Endothelial cell of umbilical vein (primary cell): ENCODE measurements at regions of chr7 and their contacts with region 1.

Region 1: GRCh38 chr7:32164346-32164957 is 94.2 kb upstream of the PDE1C start:
- DNase-seq: peak; percentile 70
- H3K4me3 ChIP-seq: no peak overlapping the region
- H3K27ac ChIP-seq: no peak overlapping the region
- H3K4me1 ChIP-seq: peaks cover 26% of the 10 kb centered on the region
- H3K27me3 ChIP-seq: no peaks in the 10 kb centered on the region
- CTCF ChIP-seq: peak; percentile 43 to 49
- POLR2A ChIP-seq: no peak

Region 2: DNA sequence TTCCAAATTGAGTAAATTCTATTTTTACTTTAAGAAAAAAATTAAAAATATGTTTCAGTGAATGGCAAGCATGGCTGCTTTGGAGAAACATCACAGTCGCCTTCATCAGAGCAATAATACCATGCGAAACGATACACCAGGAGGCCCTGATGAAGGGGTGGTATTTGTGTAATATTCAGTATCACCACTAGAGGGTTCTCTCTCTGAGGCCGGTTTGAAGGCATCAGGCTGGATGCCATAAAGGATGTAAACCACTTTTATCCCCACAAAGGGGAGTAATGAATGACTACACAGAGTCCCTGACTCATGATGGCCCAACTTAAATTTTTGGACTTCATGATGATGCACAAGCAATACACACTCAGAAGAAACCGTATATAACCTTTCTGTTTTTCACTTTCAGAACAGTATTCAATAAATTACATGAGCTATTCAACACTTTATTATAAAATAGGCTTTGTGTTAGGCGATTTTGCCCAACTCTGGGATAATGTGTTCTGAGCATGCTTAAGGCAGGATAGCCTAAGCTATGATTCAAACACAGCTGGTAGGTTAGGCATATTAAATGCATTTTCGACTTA is 382.0 kb before region 1 on chr7:
- CTCF ChIA-PET with region 1: interaction called, 58 read pairs
- POLR2A ChIA-PET with region 1: no interaction called
- dilution Hi-C with region 1: no loop called
- intact Hi-C with region 1: loop called (anchors 1 kb)
- DNase-seq: peak; percentile 69
- H3K4me3 ChIP-seq: no peak overlapping the region
- H3K27ac ChIP-seq: no peak overlapping the region
- H3K4me1 ChIP-seq: no peaks in the 10 kb centered on the region
- H3K27me3 ChIP-seq: no peaks in the 10 kb centered on the region
- CTCF ChIP-seq: peak; percentile 68 to 70
- POLR2A ChIP-seq: no peak

Region 3: DNA sequence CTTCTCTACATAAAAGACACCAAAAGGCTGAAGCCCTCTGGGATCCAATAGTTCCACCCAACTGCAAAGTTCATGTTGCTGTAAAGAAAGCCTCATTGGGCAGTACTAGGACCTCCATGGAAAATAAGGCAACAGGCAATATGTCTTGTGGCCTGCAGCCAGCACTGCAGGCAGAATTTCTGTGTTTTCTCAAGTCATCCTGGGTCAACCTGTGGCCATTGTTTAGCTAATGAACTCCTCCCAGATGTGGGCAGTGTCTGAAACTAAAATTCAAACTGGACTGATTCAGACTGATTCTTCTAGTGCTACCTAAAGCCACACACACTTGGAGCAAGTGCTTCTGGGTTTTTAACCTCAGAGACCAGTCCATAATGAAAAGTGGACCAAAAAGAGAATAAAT is 335.9 kb before region 1 on chr7:
- CTCF ChIA-PET with region 1: interaction called, 18 read pairs
- POLR2A ChIA-PET with region 1: no interaction called
- dilution Hi-C with region 1: no loop called
- intact Hi-C with region 1: no loop called
- DNase-seq: peak; percentile 50
- H3K4me3 ChIP-seq: no peak overlapping the region
- H3K27ac ChIP-seq: no peak overlapping the region
- H3K4me1 ChIP-seq: peaks cover 20% of the 10 kb centered on the region
- H3K27me3 ChIP-seq: no peaks in the 10 kb centered on the region
- CTCF ChIP-seq: no peak
- POLR2A ChIP-seq: no peak

Region 4: DNA sequence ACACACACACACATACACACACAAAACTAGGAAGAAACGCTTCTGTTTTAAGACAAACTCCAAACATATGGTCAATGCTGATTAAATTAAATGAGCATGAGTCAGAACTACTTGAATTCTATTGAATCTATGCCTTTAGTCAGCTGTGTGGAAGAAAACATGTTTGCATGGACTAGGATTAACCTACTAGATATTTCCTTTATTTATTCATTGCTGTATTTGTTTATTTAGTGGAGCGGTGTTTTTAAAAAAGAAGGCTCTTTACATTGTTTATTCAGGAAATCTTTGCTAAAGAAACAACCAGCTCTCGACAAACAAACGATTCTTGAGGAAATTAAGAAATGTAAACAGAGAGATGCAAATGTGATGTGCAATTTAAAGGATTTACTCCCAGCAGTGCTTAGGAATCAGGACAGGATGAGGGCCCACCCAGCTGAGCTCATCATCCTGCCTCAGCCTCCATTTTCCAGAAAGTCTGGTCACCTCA is 177.5 kb before region 1 on chr7:
- CTCF ChIA-PET with region 1: interaction called, 7 read pairs
- POLR2A ChIA-PET with region 1: no interaction called
- dilution Hi-C with region 1: no loop called
- intact Hi-C with region 1: loop called (anchors 2 kb)
- DNase-seq: peak; percentile 85
- H3K4me3 ChIP-seq: no peak overlapping the region
- H3K27ac ChIP-seq: peak overlapping the region; percentile 83
- H3K4me1 ChIP-seq: peaks cover 34% of the 10 kb centered on the region
- H3K27me3 ChIP-seq: no peaks in the 10 kb centered on the region
- CTCF ChIP-seq: no peak
- POLR2A ChIP-seq: no peak

Region 5: GRCh38 chr7:32140210-32140939 is 24.1 kb before region 1 on chr7:
- CTCF ChIA-PET with region 1: interaction called, 31 read pairs
- POLR2A ChIA-PET with region 1: no interaction called
- dilution Hi-C with region 1: no loop called
- intact Hi-C with region 1: loop called (anchors 1 kb)
- DNase-seq: no peak
- H3K4me3 ChIP-seq: no peak overlapping the region
- H3K27ac ChIP-seq: no peak overlapping the region
- H3K4me1 ChIP-seq: no peaks in the 10 kb centered on the region
- H3K27me3 ChIP-seq: peaks cover 2 to 3% of the 10 kb centered on the region in 2 experiments
- CTCF ChIP-seq: peak in 1 of 2 donors; percentile 11
- POLR2A ChIP-seq: no peak